Cardiac septum (tissue), 1 donor: ENCODE measurements at regions of chr16 and their contacts with region 1.

Region 1: DNA sequence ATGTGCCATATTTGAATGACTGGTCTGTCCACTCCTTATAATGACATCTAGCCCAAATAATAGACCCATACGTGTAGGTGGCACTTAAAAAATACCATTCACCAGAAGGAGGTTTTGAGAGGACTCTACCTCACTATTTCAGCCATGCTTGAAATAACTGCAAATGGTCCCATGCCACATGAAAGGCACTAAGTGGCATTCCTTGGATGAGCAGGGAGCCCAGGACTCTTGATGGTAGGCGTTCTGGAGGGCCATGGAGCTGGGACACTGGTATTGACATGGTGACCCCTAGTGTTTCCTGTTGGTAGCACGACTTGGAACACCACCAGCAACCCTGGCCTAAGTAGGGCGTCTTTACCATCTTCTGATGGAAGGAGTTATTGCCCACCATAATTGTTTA is 148.7 kb upstream of the ZFHX3 start:
- DNase-seq: no peak

Region 2: DNA sequence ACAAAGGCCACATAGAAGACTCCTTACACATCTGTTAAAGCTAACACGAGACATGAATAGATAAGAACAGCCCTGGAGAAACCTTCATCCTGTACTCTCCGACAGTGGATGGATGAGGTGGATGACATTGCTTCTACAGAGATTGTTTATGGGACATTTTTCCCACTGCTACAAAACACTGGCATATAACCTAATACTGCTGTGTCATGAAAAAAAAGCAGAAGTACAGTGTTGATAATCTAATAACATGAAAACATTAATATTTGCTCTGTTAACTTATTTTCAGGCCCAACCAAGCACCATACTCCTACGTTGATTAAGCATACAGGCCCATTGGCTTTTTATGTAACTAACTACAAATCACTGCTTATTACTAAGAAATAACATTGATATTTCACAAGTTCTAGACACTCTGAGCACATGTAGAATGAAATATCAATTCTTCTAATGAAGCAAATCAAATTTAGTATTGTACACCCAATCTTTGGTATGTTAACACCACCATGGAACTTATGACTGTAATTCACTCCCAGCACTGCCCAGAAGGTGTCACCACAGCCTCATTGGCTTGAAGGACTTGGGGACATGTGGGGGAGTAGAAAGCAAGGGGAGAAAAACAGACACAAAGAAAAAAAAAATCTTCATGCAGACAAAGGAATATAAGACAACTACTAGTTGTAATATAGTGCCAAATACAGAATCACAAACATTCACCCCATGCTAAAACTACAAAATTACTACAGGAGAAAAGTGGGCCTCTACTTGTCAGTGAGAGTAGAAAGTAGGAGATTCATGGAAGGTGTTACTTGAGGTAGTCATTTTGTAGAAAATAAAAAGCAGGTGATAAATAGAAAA is 694.7 kb before region 1 on chr16:
- intact Hi-C with region 1: loop called (anchors 10 kb)
- DNase-seq: no peak

Region 3: GRCh38 chr16:72664509-72665225 is 532.0 kb before region 1 on chr16:
- intact Hi-C with region 1: loop called (anchors 10 kb)
- DNase-seq: peak; percentile 96

Region 4: GRCh38 chr16:72832621-72833248 is 363.9 kb before region 1 on chr16:
- intact Hi-C with region 1: loop called (anchors 5 kb)
- DNase-seq: peak; percentile 91